Right ventricle myocardium inferior (tissue), 1 donor: ENCODE measurements at regions of chr6 and their contacts with region 1.

Region 1: GRCh38 chr6:170244721-170245474 is 46.0 kb downstream of the DLL1 start:
- DNase-seq: no peak
- ATAC-seq: no peak

Region 2: DNA sequence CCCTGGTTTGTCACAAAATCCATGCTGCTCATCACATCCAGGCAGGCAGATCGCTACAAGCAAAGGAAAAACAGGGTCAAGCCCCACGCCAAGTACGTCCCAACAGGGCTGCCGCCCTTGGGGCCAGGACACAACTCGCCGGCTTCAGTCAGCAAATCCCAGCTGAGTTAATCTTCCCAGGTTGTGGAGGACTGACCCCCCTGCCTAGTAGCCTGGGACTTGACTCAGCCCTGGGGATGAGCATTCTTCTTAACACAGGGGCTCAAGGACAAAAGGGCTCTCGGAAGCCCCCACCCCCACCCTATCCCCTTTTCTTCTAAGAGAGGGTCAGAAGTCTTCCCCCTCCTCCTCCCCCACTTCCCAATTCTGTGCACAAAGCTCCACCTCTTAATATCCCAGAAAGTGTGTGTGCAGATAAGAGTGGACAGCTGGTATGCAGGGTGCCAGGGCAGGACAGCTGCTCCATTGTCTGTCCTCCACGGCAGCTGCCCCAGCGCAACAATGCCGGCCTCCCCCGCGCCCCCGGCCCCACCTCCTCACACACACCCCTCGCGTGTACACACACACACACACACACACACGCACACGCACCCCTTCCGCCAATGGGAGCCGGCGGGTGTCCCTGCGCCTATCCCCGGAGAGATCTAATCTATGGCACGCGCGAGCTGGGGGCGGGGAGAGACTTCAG is 41.5 kb after region 1 on chr6:
- intact Hi-C with region 1: loop called (anchors 5 kb)
- DNase-seq: peak; percentile 81
- ATAC-seq: peak; percentile 27

Region 3: DNA sequence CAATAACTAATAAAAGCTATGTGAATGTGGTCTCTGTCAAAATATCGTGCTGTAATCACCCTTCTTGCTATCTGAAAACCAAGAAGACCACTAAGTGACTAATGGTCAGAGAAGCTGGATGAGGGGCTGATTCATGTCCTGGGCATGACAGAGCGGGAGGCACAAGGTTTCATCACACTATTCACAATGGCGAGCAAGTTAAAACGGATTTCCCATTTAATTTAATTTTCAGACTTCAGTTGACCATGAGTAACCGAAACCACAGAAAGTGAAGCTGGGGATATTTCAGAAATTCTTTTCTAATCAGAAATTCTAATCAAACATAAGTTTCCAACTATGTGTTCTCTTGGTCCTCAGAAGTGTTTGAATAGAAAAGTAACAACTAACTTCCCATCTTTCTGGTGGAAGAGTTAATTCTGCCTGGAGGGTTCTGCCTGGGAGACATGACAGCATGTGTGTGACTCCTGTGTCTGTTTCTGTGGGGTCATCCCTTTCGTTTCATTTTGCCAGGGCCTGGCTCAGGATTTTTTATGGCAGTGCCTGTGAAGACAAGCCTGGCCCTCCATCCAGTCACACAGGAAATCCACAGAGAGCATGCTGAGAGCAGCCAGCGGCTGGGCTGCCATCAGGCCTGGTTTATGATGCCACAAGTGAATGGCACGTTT is 160.5 kb after region 1 on chr6:
- intact Hi-C with region 1: no loop called
- DNase-seq: no peak
- ATAC-seq: no peak